ENCODE measurements at regions of chr2 and their contacts with region 1.

Region 1: GRCh38 chr2:178498137-178498536 is 17.9 kb downstream of the PLEKHA3 start:
- DNase-seq: no peak
- H3K4me3 ChIP-seq: no peak overlapping the region
- H3K27ac ChIP-seq: no peak overlapping the region
- H3K4me1 ChIP-seq: no peaks in the 10 kb centered on the region
- H3K27me3 ChIP-seq: no peaks in the 10 kb centered on the region
- CTCF ChIP-seq: no peak

Region 2: DNA sequence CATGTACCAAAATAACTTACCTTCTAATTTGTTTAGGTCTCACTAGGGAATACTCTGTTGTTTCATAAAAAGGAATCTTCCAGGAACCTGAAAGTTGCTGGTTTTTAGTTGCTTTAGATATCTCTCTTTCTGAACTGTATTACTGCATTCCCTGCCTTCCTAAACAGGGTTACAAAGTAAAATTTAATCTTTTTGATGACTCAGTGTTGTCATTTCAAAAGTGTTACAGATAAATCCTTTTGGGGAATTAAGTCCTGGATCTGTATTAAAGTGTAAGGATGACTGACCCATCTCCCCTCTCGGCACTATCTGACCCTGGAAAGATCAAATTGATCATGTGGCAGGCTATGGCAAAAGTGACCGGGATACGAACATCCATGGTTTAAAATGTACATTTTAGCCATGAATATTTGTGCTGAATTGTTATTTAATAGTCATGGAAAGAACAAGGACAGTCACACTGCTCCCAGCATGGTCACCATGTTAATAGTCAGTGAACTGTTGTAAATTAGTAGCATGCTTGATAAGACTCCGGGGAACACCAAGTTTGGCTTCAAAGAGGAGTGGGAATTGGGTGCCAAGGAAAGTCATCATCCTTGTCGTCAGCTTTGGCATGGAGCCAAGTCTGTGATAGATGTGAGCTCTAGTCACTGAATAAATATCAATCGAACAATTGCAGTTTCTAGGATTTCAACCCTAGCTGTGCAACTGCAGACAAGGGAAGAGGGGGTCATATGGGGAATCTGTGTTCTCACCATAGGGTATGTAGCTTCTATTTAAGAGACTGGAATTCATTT is 13.7 kb before region 1 on chr2:
- CTCF ChIA-PET with region 1: no interaction called
- POLR2A ChIA-PET with region 1: interaction called, 5 read pairs
- intact Hi-C with region 1: loop called (anchors 2 kb)
- DNase-seq: peak in 1 of 2 experiments; percentile 48
- H3K4me3 ChIP-seq: no peak overlapping the region
- H3K27ac ChIP-seq: no peak overlapping the region
- H3K4me1 ChIP-seq: peaks cover 41% of the 10 kb centered on the region
- H3K27me3 ChIP-seq: no peaks in the 10 kb centered on the region
- CTCF ChIP-seq: no peak

Region 3: GRCh38 chr2:179606141-179606540 is 1108.0 kb after region 1 on chr2:
- CTCF ChIA-PET with region 1: no interaction called
- POLR2A ChIA-PET with region 1: no interaction called
- intact Hi-C with region 1: no loop called
- DNase-seq: no peak
- H3K4me3 ChIP-seq: no peak overlapping the region
- H3K27ac ChIP-seq: no peak overlapping the region
- H3K4me1 ChIP-seq: no peaks in the 10 kb centered on the region
- H3K27me3 ChIP-seq: no peaks in the 10 kb centered on the region
- CTCF ChIP-seq: no peak